Psoas muscle (tissue), 8 donors: ENCODE measurements at regions of chr15 and their contacts with region 1.

Region 1: GRCh38 chr15:40274350-40275274 is 8.3 kb downstream of the ANKRD63 start:
- DNase-seq: peak; percentile 80 to 90
- ATAC-seq: peak; percentile 80 to 91 (median 82)
- H3K4me3 ChIP-seq: no peak overlapping the region
- H3K27ac ChIP-seq: no peak overlapping the region
- H3K4me1 ChIP-seq: no peaks in the 10 kb centered on the region
- H3K27me3 ChIP-seq: peaks cover 0 to 12% (median 8%) of the 10 kb centered on the region in 3 donors
- CTCF ChIP-seq: peak; percentile 100

Region 2: DNA sequence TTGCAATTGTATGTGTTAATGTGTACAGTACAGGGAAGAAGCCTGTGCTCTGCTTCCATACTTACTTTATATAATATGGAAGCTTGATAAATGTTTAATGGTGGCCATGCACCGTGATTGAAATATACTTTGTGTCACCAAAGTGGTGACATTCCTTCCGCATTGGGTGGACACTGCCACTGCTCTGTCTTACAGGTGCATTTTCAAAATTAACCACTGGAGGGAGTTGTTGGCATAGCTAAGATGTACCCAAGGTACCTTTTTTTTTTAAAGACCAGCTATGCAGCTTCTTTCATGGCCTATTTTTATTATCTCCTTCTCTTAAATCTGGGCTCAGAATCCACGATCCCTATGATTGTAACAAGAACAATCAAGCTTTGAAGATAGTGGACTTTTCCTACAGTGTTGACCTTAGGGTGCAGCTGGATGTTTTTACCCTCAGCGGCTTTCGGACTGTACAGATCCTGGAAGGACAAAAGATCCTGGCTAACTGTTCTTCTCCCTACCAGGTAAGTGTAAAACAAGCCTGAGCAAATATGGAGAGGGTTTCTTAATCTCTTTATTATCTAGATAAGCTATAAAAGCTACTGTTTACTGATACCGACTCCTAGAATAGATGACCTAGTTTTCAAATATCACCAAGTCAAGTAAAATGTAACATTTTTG is 57.3 kb before region 1 on chr15:
- intact Hi-C with region 1: loop called (anchors 1 to 2 kb)
- DNase-seq: peak in 1 of 2 donors; percentile 10
- ATAC-seq: peak; percentile 89 to 96 (median 92)
- H3K4me3 ChIP-seq: no peak overlapping the region
- H3K27ac ChIP-seq: no peak overlapping the region
- H3K4me1 ChIP-seq: no peaks in the 10 kb centered on the region
- H3K27me3 ChIP-seq: no peaks in the 10 kb centered on the region
- CTCF ChIP-seq: peak; percentile 90

Region 3: GRCh38 chr15:40310001-40310959 is 35.7 kb after region 1 on chr15:
- intact Hi-C with region 1: loop called in 1 of 2 experiments (anchors 1 kb)
- DNase-seq: peak in 1 of 2 donors; percentile 35
- ATAC-seq: peak; percentile 56 to 68 (median 63)
- H3K4me3 ChIP-seq: no peak overlapping the region
- H3K27ac ChIP-seq: no peak overlapping the region
- H3K4me1 ChIP-seq: no peaks in the 10 kb centered on the region
- H3K27me3 ChIP-seq: no peaks in the 10 kb centered on the region
- CTCF ChIP-seq: peak; percentile 61

Region 4: DNA sequence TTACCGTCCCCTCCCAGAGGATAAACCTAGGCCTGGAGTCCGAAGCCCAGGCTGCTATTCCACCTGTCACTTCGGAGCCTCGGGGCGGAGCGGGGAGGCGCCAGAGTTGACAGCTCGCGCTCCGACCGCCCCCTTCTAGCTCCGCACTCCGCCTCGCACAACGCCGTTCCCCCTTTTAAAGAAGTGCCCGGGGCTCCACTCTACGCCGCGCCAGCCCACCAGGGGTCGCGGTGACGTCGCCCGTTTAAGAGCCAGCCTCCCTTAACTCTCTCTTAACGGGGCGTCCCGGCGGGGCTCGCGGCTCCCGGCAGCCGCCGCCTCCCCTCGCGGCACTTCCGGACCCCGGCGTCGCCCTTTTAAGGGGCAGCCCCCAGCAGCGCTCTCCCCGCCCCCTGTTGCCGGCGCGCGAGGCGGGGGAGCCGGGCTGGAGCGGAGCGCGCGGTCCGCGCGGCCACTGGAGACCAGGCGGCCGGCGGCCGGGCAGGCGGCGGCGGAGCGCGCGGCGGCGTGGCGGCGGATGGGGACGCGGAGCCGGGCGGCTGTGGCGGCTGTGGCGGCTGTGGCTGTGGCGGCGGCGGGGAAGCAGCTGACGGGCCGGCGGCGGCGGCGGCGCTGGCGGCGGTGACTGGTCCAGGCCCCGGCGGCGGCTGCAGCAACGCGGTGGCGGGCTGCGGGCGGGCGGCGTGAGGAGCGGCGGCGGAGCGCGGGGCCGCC is 48.8 kb after region 1 on chr15 and contains the start of gene INAFM2:
- intact Hi-C with region 1: no loop called
- DNase-seq: peak; percentile 92 to 96
- ATAC-seq: peak; percentile 89 to 94 (median 92)
- H3K4me3 ChIP-seq: peak within 1 kb of the TSS; percentile 86
- H3K27ac ChIP-seq: peak within 1 kb of the TSS; percentile 86
- H3K4me1 ChIP-seq: peaks cover 27% of the 10 kb centered on the region
- H3K27me3 ChIP-seq: no peaks in the 10 kb centered on the region
- CTCF ChIP-seq: peak; percentile 68
- total RNA-seq, gene INAFM2: 22.3 to 32.4 (median 28.9) TPM